ENCODE measurements at regions of chrX and their contacts with region 1.

Region 1: GRCh38 chrX:120549483-120550452 is 11.0 kb downstream of the CUL4B start:
- DNase-seq: peak; percentile 85
- H3K4me3 ChIP-seq: peak overlapping the region; percentile 31; the same call in 1 of the 2 replicates
- H3K27ac ChIP-seq: peak overlapping the region; percentile 86
- H3K4me1 ChIP-seq: peaks cover 56% of the 10 kb centered on the region
- H3K27me3 ChIP-seq: no peaks in the 10 kb centered on the region

Region 2: GRCh38 chrX:120769576-120770341 is 220.0 kb after region 1 on chrX:
- in situ Hi-C with region 1: loop called (anchors 25 kb)
- DNase-seq: peak; percentile 75
- H3K4me3 ChIP-seq: no peak overlapping the region
- H3K27ac ChIP-seq: peak overlapping the region; percentile 86
- H3K4me1 ChIP-seq: peaks cover 30% of the 10 kb centered on the region
- H3K27me3 ChIP-seq: no peaks in the 10 kb centered on the region